ENCODE measurements at regions of chr3 and their contacts with region 1.

Region 1: DNA sequence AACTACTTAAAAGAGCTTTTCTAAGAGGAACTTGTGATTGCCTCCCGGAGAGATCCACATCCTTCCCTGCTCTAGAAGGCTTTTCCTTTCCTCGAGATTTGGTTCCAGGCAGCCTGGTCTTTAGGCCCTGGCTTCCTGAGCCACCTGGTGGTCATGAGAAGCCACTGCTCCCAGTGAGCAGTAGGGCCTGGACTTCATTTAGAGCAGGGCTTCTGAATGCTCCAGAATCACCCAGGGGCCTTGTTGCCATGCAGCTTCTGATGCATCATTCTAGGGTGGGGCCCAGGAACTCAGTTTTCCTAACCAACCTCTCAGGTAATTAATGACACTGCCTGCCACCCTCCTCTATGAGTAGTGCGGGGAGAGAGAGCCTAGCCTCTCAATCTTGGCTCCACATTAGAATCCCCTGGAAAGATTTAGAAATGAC is 29.6 kb downstream of the PSMD6 start:
- DNase-seq: peak; percentile 46 to 95 (median 70)

Region 2: DNA sequence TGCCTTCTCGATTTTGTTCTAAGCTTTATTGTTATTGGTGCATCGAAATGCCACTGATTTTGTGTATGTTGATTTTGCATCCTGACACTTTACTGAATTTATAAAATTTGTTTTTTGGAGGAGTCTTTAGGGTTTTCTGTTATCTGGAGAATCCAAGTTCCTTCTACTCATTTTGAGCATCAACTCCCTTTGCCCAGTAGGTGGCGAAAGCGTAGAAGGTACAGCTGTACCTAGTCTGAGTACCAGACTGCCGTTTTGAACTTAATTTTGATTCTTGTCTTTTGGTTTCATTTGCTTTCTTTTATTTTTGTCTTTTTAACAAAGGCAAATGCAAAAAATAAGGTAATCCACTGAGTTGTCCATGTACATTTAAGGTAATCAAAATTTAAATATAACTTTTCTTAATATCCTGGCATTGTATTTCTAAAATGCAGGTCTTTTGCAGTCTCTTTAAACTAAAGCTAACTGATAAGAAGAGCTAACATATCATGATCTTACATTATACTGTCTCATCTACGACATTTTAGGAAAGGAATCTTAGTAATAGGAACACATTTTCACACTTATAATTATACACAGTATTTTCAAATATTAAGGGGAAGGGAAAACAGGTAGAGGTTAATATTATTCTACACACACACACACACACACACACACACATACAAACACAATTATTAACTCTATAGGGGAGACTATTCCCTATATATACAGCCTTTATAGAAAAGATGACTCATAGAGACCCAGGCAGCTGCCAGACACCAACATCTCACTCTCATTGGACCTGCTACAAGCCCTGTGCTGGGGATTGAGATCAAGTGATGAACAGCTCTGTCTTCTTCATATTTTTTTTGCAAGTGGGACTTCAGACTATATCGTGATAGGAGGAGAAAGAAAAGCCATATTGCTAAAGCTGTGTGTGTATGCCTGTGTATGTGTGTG is 643.8 kb before region 1 on chr3:
- intact Hi-C with region 1: loop called (anchors 5 kb)
- DNase-seq: peak in 6 of 10 donors; percentile 24 to 88 (median 50)

Region 3: DNA sequence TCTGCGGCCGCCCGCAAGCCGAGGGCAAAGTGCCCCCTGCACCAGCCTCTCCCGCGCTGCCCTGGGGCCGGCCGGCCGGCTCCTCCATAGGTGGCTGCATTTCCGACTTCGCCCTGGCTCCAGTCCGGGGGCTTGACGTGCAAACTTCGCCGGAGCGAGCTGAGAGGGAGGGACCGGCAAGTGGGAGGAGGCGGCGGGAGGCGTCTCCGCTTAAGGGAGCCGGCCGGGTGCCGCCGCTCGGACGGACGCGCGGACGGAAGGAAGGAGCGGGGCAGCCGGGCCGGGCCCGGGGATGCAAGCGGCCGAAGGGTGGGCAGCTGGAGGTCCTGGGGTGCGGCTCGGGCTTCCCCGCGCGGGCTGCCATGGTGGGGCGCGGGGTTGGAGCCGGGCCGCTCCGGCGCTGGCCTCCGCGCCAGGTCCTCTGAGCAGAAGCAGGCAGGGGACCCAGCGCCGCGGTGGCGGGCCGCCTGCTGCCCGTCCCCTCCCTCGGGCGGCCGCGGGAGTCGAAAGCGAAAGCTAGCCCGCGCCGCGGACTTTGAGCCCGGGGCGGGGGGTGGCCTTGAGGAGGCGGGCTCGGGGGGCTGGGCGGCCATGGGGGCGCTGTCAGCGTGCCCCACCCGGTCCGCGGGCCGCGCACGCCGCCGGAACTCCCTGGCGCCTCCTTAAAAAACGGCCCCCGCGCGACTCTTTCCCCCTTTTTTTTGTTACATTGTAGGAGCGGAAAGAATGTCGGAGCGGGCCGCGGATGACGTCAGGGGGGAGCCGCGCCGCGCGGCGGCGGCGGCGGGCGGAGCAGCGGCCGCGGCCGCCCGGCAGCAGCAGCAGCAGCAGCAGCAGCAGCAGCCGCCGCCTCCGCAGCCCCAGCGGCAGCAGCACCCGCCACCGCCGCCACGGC is 81.5 kb before region 1 on chr3 and contains the start of gene SCAANT1:
- intact Hi-C with region 1: loop called (anchors 1 kb)
- DNase-seq: peak; percentile 75 to 97 (median 83)

Region 4: GRCh38 chr3:63937661-63938651 is 55.7 kb before region 1 on chr3:
- intact Hi-C with region 1: no loop called
- DNase-seq: no peak

Region 5: GRCh38 chr3:63961891-63962290 is 31.8 kb before region 1 on chr3:
- intact Hi-C with region 1: loop called (anchors 2 kb)
- DNase-seq: no peak

Region 6: DNA sequence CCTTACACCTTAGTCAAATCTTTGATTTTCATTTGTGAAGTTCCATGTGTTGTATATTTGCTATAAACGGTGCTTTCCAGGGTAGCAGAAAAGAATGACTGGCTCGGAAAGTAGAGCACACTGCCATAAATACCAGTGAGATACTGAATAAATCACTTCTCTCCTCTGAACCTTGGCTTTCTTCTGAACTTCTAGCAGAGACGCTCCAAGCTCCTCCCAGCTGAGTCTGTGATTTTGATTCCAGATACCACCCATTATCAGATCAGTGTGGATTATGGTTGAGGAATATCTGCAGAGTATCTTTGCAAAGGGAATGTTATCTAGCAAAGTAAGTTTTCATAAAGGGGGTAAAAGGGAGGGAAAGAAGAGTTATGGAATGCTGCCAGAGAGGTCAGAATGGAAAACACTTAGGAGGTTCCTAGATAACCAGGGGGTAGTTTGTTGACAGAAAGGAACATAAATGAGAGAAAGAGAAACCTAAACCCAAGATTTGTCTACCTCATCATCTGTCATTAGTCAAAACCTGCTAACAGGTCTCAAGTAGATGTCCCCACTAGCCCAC is 128.2 kb after region 1 on chr3:
- intact Hi-C with region 1: no loop called
- DNase-seq: no peak

Measured in posterior cingulate gyrus (tissue), 11 donors.